H1 (cell line): ENCODE measurements at regions of chr5 and their contacts with region 1.

Region 1: GRCh38 chr5:163408311-163408923 is 29.0 kb upstream of the CCNG1 start:
- DNase-seq: peak in 1 of 2 experiments; percentile 75
- H3K4me3 ChIP-seq: no peak overlapping the region
- H3K27ac ChIP-seq: no peak overlapping the region
- H3K4me1 ChIP-seq: no peaks in the 10 kb centered on the region
- H3K27me3 ChIP-seq: no peaks in the 10 kb centered on the region
- CTCF ChIP-seq: peak; percentile 36 to 87 (median 80)
- EP300 ChIP-seq: no peak
- POLR2A ChIP-seq: no peak
- RAD21 ChIP-seq: peak; percentile 92 to 94

Region 2: GRCh38 chr5:162248107-162248713 is 1160.2 kb before region 1 on chr5:
- CTCF ChIA-PET with region 1: interaction called, 10 read pairs
- POLR2A ChIA-PET with region 1: no interaction called
- DNase-seq: peak; percentile 34 to 86
- H3K4me3 ChIP-seq: no peak overlapping the region
- H3K27ac ChIP-seq: no peak overlapping the region
- H3K4me1 ChIP-seq: no peaks in the 10 kb centered on the region
- H3K27me3 ChIP-seq: no peaks in the 10 kb centered on the region
- CTCF ChIP-seq: peak; percentile 37 to 71 (median 48); a peak in 3 of 4 replicates
- EP300 ChIP-seq: no peak
- POLR2A ChIP-seq: no peak
- RAD21 ChIP-seq: peak; percentile 54 to 66

Region 3: GRCh38 chr5:163397354-163397753 is 11.1 kb before region 1 on chr5:
- CTCF ChIA-PET with region 1: interaction called, 23 read pairs
- POLR2A ChIA-PET with region 1: no interaction called
- DNase-seq: no peak
- H3K4me3 ChIP-seq: no peak overlapping the region
- H3K27ac ChIP-seq: no peak overlapping the region
- H3K4me1 ChIP-seq: no peaks in the 10 kb centered on the region
- H3K27me3 ChIP-seq: no peaks in the 10 kb centered on the region
- CTCF ChIP-seq: no peak
- EP300 ChIP-seq: no peak
- POLR2A ChIP-seq: no peak
- RAD21 ChIP-seq: no peak